ENCODE measurements at regions of chr16 and their contacts with region 1.

Region 1: GRCh38 chr16:87571136-87571867 is 31.0 kb upstream of the JPH3 start:
- DNase-seq: no peak

Region 2: DNA sequence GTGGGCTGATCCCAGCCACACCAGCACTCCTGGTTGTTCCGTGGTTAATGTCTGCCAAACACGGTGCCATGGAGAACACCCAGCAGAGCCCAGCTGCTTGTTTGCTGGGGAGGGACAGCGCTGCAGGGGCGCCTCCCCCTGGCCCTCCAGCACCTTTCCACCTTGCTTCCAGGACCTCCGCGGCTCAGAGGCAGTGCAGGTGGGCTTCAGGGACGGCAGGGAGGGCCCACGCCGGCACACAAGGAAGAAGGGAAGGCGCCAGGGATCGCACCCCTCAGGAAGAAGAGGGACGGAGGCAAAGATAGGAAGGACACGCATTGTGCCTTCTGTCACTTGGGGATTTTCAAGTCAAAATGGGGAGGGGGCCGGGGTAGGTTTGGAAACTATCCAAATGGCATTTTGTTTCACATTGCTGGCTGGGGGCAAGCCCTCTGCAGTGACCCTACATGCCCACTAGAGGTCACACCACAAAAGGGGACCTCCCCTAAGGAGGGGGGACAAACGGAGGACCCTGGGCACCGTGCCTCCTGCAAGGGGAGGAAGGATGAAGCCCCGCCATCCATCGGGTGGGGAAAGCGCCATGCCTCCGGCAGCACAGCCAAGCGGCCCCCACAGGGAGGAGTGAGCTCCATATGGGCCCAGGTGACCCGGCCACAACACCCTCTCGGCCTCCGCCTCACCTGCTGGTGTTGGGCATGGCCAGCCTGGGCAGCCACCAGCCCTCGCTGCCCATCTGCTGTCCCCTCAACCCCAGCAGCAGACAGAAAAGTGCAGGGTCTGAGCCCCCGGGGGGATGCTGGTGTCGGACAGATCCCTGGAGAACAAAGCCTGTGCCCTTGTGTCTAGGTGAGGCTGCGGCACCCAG is 246.7 kb before region 1 on chr16:
- intact Hi-C with region 1: loop called (anchors 10 kb)
- DNase-seq: peak; percentile 51